Posterior vena cava (tissue), 2 donors: ENCODE measurements at regions of chr2 and their contacts with region 1.

Region 1: GRCh38 chr2:230153390-230153976 is 66.3 kb downstream of the SP110 start:
- DNase-seq: no peak

Region 2: DNA sequence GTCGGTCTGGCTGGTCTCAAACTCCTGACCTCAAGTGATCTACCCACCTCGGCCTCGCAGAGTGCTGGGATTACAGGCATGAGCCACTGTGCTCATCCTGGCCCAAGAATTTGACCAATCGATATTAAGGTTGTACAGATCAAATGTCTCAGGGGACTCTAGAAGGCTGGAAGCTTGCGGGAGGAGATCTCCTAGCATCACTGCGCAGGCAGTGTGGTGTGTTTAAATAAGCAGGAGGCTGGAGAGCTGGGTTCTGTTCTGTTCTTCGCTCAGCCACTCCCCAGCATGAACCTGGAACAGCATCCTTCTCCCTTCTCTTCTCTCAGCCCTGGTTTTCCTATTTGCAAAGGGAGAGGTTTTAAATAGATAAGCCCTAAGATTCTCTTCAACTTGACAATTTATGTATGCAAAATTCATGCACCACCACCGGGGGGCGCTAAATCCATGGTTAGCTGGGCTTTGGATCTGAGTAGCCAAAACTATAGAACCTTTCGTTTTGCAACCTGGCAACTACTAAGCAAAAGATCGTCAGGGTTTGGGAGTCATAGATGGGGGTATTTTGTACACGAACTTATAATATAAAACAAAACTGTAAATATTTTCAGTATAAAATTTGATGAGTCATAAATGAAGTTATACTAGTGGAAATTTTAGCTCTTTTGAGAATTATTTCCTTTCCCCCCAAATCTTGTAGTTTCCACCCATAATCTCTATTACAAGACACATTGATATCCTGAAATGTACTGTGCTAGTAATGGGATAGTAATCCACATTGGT is 145.4 kb before region 1 on chr2:
- intact Hi-C with region 1: loop called (anchors 5 to 10 kb)
- DNase-seq: peak; percentile 93

Region 3: GRCh38 chr2:230018153-230018552 is 135.3 kb before region 1 on chr2:
- intact Hi-C with region 1: loop called in 1 of 2 experiments (anchors 10 kb)
- DNase-seq: no peak

Region 4: DNA sequence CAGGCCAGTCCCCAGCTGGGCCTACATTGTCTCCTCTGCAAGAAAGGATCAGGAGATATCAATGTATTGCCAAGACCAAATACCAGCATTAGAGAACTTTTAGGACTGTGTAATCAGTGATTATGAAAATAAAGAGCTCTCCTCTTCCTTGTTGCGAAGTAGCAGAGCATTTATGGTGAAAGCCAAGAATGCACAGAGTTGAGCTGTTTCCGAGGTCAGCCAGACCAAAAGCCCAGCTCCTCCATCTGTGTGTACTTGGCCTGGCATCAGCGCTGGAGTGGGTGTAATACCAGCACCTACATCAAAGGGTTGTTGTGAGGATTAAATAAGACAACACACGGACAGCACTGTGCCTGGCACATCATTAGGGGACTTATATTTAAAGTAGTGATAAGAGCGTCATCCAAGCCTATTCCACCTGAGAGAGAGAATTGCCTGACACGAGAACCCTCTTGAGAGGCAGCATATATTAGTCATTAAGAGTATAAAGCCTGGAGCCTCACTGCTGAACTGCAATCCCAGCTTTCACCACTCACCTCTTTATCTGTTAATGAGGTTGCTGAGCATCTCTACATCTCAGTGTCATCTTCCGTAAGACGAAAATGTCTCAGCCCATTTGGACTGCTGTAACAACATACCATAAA is 77.4 kb before region 1 on chr2:
- intact Hi-C with region 1: loop called in 1 of 2 experiments (anchors 10 kb)
- DNase-seq: no peak